ENCODE measurements at regions of chr14 and their contacts with region 1.

Region 1: GRCh38 chr14:21455911-21456667 is at the start of gene CHD8:
- DNase-seq: peak; percentile 100
- H3K4me3 Mint-ChIP-seq: peak within 1 kb of the TSS; percentile 94
- H3K27ac Mint-ChIP-seq: peak within 1 kb of the TSS; percentile 99
- H3K4me1 Mint-ChIP-seq: peaks cover 28% of the 10 kb centered on the region
- H3K27me3 Mint-ChIP-seq: no peaks in the 10 kb centered on the region
- total RNA-seq, gene CHD8: 120 and 124 TPM in 2 replicates

Region 2: GRCh38 chr14:21269252-21270046 is 186.6 kb before region 1 on chr14 and contains the start of gene HNRNPC:
- intact Hi-C with region 1: loop called (anchors 1 kb)
- DNase-seq: peak; percentile 100
- H3K4me3 Mint-ChIP-seq: peak within 1 kb of the TSS; percentile 99
- H3K27ac Mint-ChIP-seq: peak within 1 kb of the TSS; percentile 100
- H3K4me1 Mint-ChIP-seq: peaks cover 29% of the 10 kb centered on the region
- H3K27me3 Mint-ChIP-seq: no peaks in the 10 kb centered on the region
- total RNA-seq, gene HNRNPC: 972 and 976 TPM in 2 replicates

Region 3: GRCh38 chr14:21414137-21414631 is 41.9 kb before region 1 on chr14:
- intact Hi-C with region 1: loop called (anchors 1 kb)
- DNase-seq: no peak
- H3K4me3 Mint-ChIP-seq: no peak overlapping the region
- H3K27ac Mint-ChIP-seq: peak overlapping the region; percentile 91
- H3K4me1 Mint-ChIP-seq: peaks cover 26% of the 10 kb centered on the region
- H3K27me3 Mint-ChIP-seq: no peaks in the 10 kb centered on the region

Region 4: DNA sequence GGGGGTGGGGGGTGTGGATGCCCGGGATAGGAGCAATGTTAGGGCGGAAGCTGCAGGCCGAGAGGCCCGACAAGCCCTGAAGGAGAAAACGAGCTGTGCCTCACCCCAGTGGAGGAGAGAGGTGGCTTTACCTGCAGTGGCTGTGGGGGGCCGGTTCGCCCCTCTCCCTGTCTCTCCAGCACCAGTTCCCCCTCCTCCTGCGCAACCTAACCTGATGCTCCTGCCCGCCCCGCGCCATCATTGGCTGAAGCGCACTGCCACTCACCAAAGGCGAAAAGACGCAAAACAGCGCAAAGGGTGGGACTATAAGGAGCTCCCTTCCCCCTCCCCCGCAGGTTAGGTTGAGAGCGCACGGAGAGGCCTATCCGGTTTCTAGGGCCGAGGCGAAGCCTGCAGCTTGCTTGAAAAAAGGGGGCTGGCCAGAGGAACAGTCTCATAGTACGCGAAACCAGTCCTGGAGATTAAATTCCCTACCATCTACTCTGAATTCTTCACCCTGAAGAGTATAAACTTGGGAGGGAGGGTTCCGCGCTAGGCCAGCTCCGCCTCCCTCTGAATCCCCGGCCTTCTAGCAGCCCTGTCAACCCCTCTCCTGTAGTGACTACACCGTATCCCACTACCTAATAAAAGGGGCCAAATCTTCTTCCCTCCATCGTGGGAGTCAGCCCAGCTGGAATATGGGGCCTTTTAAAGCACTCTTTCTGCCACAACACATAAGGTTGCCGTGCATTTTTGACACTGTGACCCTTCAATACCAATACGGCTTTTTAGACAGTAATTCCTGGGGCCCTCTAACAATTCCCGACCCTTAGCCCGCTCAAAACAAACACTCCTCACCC is 18.8 kb before region 1 on chr14:
- intact Hi-C with region 1: loop called (anchors 1 kb)
- DNase-seq: peak; percentile 95
- H3K4me3 Mint-ChIP-seq: peak overlapping the region; percentile 88
- H3K27ac Mint-ChIP-seq: peak overlapping the region; percentile 79
- H3K4me1 Mint-ChIP-seq: peaks cover 54% of the 10 kb centered on the region
- H3K27me3 Mint-ChIP-seq: no peaks in the 10 kb centered on the region

Region 5: GRCh38 chr14:21476925-21477681 is 21.0 kb after region 1 on chr14 and contains the starts of genes RAB2B and TOX4:
- intact Hi-C with region 1: loop called (anchors 1 kb)
- DNase-seq: peak; percentile 97
- H3K4me3 Mint-ChIP-seq: peak within 1 kb of the TSS; percentile 99
- H3K27ac Mint-ChIP-seq: peak within 1 kb of the TSS; percentile 99
- H3K4me1 Mint-ChIP-seq: peaks cover 18% of the 10 kb centered on the region
- H3K27me3 Mint-ChIP-seq: no peaks in the 10 kb centered on the region
- total RNA-seq, gene RAB2B: 27.4 and 30.5 TPM in 2 replicates
- total RNA-seq, gene TOX4: 68.1 and 70.1 TPM in 2 replicates

Region 6: DNA sequence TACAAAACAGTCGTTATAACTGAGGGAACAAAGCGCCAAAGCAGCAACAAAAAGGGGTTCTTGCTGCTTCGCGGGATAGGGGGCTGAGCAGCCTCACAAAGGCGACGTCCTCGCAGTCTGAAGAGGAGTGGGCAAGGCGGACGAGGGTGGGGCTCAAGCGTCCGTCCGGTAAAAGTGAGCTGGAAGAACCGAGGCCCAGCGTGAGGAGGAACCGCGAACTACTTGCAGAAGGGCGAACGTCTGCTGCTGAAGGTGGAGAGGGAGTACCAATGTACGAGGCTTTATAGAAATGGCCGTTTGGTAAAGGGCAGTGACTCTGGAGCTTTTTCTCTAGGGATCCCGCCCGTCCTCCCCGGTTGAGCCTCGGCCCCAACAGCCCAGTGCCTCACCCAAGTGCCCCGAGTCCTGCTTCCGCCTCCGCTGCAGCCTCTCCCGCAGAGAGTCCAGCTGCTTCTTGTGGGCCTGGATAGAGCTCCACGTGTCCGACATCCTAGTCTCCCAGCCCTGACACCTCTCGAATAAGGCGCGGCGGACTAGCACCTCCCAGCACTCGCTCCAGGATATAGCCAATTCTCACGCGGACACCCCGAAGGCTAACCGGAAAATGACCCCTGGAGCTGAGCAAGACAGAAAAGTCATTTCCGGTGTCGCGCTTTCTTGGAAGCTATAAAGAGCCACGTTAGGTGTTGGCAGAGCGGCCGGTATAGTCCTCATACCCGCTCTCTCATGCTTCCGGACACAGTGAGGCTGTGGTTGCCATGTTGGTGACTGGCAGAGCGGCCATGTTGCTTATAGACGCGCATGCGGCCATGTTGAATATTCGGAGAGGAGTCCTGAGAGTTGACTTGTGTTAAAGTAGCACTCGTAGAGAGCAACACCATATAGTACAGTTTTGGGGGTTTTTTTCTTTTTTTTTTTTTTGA is 54.9 kb after region 1 on chr14 and contains the start of gene METTL3:
- intact Hi-C with region 1: loop called (anchors 1 kb)
- DNase-seq: peak; percentile 91
- H3K4me3 Mint-ChIP-seq: peak within 1 kb of the TSS; percentile 88
- H3K27ac Mint-ChIP-seq: peak within 1 kb of the TSS; percentile 97
- H3K4me1 Mint-ChIP-seq: peaks cover 28% of the 10 kb centered on the region
- H3K27me3 Mint-ChIP-seq: peaks cover 5% of the 10 kb centered on the region
- total RNA-seq, gene METTL3: 76.7 and 80.5 TPM in 2 replicates

Region 7: DNA sequence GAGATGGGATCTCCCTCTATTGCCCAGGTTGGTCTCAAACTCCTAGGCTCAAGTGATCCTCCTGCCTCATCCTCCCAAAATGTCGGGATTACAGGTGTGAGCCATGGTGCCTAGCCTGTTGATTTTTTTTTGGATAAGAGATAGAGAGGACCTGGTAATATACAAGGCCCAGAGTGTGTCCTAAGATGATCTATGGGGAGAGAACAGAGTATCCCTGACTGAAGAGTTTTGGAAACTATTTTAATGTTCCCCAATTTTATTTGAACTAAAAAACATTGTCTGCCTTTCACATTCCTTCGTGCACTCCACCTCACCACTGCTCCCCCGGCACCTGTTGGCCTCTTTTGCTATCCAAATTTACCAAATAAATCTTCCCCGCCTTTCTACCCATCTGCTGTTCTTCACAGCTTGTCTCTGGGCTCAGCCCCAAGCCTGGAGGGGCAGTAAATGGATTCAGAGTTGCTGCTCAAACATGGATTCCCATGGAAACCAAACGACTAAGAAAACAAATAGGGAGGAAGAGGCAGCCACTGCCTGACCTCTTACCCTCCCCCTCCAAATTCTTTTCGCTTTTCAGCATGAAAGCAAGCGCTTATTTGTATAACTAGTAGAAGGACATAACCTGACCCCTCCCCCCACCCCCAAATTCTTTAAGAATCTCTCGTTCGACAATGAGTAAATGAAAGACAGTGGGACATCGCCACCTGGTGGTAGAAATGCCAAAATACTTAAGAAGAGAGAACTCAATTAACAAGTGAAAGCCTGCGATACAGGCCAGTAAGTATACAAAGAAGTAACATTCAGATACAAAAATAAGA is 101.2 kb after region 1 on chr14:
- intact Hi-C with region 1: loop called (anchors 5 kb)
- DNase-seq: peak; percentile 55
- H3K4me3 Mint-ChIP-seq: no peak overlapping the region
- H3K27ac Mint-ChIP-seq: peak overlapping the region; percentile 19
- H3K4me1 Mint-ChIP-seq: peaks cover 4% of the 10 kb centered on the region
- H3K27me3 Mint-ChIP-seq: no peaks in the 10 kb centered on the region